ENCODE measurements at regions of chr11 and their contacts with region 1.

Region 1: GRCh38 chr11:92969634-92970347 is at the start of gene MTNR1B:
- DNase-seq: no peak
- CTCF ChIP-seq: no peak

Region 2: GRCh38 chr11:93054881-93055280 is 85.1 kb after region 1 on chr11:
- in situ Hi-C with region 1: loop called (anchors 25 kb)
- DNase-seq: no peak
- CTCF ChIP-seq: no peak